ENCODE measurements at regions of chrX and their contacts with region 1.

Region 1: GRCh38 chrX:153460845-153461244 is 9.5 kb downstream of the HAUS7 start:
- DNase-seq: peak; percentile 52
- H3K4me3 Mint-ChIP-seq: no peak overlapping the region
- H3K27ac Mint-ChIP-seq: no peak overlapping the region
- H3K4me1 Mint-ChIP-seq: no peaks in the 10 kb centered on the region
- H3K27me3 Mint-ChIP-seq: no peaks in the 10 kb centered on the region

Region 2: DNA sequence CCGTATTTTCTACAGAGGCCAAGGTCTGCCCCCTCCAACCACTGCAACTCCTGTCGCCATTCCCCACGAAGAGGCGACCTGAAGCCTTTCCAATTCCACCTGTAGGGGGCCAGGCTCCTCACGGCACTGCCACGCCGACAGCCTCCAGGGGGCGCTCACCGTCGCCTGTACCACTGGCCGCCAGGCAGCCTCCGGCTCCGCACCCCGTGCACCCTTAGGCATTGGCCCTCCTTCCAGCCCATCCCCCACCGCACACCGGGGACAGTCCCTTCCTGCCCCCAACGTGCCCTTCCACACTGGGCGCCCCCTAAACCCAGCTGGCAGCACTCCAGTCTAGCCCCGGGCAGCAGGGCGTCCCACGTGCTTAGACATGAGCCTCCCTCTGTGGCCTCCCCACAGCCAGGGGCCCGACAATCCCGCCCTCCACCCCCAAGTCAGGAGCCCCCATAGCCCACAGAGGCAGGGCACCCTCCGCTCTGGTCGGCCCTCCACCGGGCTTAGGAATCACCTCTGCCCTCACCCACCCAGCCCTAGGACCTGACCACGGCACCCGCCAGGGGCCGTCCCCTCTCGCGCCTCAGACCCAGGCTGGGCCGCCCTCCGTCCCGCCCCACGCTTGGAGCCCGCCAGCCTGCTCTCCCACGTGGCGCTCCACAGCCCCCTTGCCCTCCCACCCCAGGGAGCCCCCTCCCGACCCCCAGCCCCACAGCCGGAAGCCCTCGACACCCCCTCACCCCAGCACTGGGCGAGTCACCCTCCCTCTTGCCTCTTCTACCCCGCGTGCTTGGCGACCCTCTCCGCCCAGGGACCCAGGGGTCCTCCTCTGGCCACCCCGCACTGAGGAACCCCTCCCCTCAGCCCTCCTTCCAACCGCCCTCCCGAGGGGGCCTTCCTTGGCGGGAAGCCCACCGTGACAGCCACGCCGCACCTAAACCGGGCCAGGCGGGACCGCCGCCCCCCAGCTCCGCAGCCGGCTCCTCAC is 60.4 kb before region 1 on chrX:
- CTCF ChIA-PET with region 1: no interaction called
- intact Hi-C with region 1: loop called (anchors 10 kb)
- DNase-seq: peak; percentile 66
- H3K4me3 Mint-ChIP-seq: no peak overlapping the region
- H3K27ac Mint-ChIP-seq: no peak overlapping the region
- H3K4me1 Mint-ChIP-seq: peaks cover 1% of the 10 kb centered on the region
- H3K27me3 Mint-ChIP-seq: no peaks in the 10 kb centered on the region

Region 3: DNA sequence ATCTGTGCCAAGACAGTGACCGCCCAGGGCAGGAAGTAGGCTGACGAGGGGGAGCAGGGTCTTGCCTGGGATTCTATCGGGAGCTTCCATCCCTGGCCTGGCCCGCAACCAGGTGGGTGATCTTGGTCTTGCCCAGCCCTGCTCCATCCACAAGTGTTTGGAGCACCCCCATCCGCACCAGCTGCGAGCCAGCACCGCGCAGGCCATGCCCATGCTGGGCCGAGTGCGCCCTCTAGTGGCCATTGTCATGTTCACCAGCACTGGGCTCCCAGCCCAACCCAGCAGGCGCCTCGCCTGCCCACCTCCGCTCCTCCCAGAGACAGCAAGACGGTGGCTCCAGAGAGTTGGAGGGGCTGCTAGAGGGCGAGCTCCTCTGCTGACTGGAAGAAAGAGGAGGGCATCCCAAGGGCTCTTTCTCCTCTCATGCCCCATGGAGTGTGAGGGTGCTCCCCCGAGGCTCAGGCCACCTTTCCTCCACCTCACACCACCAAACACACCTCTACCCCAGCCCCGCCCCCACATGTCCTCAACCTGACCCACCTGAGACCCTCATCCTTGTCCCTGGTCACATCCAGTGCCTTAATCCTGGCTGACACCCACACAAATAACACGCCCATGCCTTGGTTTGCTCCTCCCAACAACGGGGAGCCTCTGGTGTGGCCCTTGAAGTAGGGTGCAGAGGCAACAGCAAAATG is 46.8 kb after region 1 on chrX:
- CTCF ChIA-PET with region 1: interaction called, 6 read pairs
- intact Hi-C with region 1: loop called (anchors 2 kb)
- DNase-seq: peak; percentile 87
- H3K4me3 Mint-ChIP-seq: no peak overlapping the region
- H3K27ac Mint-ChIP-seq: no peak overlapping the region
- H3K4me1 Mint-ChIP-seq: peaks cover 1% of the 10 kb centered on the region
- H3K27me3 Mint-ChIP-seq: no peaks in the 10 kb centered on the region